ENCODE measurements at regions of chr1 and their contacts with region 1.

Region 1: GRCh38 chr1:19651141-19651737 is 7.1 kb downstream of the NBL1 start:
- DNase-seq: peak; percentile 74
- ATAC-seq: peak; percentile 85

Region 2: DNA sequence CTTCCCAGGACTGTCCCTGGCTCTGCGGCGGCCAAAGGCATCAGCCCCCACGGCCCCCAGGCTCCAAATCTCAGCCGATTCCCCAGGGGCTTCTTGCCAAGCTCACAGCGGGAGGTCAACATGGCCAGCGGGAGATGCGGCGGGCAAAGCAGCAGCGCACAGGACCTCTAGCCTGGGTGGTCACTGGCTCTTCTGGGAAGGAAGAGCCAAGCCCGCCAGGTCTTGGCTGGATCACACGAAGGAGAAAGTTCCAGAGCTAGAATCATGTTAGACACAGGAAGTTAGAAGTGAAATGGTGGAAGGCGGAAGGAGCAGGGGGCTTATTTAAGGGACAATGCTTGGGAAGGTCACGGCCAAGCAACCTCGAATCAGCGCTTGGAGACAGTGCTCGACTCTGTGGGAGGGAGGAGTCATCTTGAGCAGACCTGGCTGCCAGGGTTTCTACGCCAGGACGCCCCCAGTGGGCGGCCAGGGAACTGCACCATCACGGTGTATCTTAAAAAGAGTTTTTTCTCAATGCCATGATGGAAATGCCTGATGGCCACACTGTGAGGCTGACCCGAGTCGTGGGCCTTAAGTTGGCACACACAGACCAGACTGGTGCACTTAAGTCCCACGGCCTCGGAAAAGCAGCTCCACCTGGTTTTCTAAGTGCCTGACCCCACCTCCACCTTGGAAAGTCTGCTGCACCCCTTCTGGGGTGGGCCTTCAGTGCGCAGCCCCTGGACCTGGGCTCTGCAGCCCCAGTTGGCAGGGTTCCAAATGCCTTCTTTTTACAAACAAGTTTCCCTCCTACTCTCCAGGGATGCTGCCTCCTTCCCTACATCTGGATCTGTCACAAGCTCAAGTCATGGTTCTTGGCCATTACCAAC is 309.8 kb before region 1 on chr1:
- intact Hi-C with region 1: loop called (anchors 5 kb)
- DNase-seq: peak; percentile 80
- ATAC-seq: peak; percentile 46

Region 3: GRCh38 chr1:19390901-19391595 is 260.2 kb before region 1 on chr1:
- intact Hi-C with region 1: loop called (anchors 2 kb)
- DNase-seq: peak; percentile 64
- ATAC-seq: peak; percentile 60

Region 4: DNA sequence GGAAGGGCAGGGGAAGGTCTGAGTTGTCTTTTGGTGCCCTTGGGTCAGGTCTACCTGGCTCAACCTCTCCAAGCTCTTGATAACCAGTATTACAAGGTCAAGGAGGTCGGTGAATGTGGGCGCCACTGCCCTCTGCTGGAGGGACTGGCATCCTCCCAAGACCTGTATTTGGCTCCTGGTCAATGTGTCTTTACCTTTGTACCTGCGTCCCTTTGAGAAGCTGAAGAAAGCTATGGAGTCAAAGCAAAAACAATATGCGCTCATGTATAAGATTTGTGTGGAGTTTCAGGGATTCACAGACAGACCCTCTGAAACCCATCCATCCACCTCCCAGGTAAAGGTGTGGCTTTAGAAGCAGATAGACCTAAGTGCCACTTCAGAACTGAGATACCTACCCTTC is 68.9 kb before region 1 on chr1:
- intact Hi-C with region 1: no loop called
- DNase-seq: peak; percentile 60
- ATAC-seq: peak; percentile 45

Region 5: DNA sequence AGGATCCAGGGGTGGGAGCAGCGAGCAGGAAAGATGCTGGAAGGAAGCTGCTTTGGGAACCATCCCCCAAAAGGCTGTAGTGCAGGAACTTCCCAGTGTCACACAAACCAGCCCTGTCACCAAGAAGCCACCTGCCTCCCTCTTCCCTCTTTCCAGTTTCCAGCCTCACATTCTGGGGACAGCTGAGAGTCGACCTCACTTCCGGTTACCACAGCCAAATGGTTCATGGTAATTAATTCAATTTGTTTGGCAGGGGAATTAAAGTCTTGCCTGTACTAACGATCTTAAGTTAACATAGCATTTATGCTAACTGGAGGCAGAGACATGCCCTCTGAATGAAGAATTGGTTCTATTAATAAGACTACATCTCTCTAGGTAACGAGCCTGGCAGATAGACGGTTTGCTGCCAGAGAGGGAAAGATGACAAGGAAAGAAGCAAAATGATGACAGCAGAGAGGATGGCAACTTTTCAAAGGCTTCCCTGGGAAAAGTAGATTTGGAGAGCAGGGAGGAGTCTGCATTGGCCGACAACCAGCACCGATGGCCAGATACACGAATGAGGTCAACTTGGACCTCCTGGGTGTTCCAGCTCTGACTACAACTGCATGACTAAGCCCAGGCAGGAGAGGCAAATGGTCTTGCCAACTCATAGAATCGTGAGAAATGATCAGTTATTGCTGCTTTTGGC is 84.3 kb after region 1 on chr1:
- intact Hi-C with region 1: no loop called
- DNase-seq: peak; percentile 76
- ATAC-seq: peak; percentile 89